Naive thymus-derived CD4-positive, alpha-beta T cell (primary cell): ENCODE measurements at regions of chr4 and their contacts with region 1.

Region 1: DNA sequence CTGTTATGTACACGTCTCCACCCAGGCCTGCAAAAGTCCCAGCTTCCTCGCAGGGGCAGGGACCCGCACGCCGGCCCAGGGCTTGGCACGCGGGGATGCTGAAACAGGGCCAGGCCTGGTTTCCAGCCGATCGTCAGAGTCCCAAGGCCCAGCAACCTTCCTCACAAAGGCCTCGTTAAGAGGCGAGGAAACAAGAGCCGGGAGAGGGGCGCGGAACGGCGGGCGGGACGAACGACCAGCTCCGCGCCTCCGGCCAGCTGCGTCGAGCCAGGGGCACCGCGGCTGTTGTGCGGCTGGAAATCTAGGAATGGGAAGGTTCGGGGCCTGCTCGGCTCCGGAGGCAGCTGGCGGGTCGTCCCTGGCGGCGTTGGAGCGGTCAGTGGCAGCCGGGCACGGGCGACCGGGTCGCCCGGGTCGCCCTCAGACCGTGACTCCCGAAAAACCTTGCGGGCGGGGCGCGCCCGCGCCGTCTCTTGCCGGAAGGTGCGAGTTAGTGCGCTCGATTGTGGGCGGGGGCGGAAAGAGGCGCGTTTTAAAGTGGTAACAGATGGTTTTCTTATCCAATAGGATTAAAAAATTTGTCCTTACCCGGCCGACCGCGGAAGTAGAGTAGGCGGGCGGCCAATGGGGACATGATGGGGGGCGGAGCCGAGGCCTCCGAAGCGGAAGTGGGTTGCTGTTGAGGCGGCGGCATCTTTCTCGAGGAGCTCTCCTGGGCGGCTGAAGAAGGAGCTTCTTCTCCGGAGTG is at the start of gene RNF4:
- DNase-seq: peak; percentile 77 to 97 (median 96)
- ATAC-seq: peak; percentile 93
- H3K4me3 ChIP-seq: peak within 1 kb of the TSS; percentile 70
- H3K4me3 Mint-ChIP-seq: peak within 1 kb of the TSS; percentile 90 to 98 (median 95)
- H3K27ac ChIP-seq: peak within 1 kb of the TSS; percentile 94
- H3K27ac Mint-ChIP-seq: peak within 1 kb of the TSS; percentile 95 to 98 (median 98)
- H3K4me1 ChIP-seq: peaks cover 31 to 37% of the 10 kb centered on the region in 2 donors
- H3K4me1 Mint-ChIP-seq: peaks cover 40 to 66% (median 53%) of the 10 kb centered on the region in 7 donors
- H3K27me3 ChIP-seq: no peaks in the 10 kb centered on the region
- H3K27me3 Mint-ChIP-seq: peaks cover 0 to 6% (median 0%) of the 10 kb centered on the region in 5 donors
- total RNA-seq, gene RNF4: 80.7 to 101 (median 91.8) TPM

Region 2: DNA sequence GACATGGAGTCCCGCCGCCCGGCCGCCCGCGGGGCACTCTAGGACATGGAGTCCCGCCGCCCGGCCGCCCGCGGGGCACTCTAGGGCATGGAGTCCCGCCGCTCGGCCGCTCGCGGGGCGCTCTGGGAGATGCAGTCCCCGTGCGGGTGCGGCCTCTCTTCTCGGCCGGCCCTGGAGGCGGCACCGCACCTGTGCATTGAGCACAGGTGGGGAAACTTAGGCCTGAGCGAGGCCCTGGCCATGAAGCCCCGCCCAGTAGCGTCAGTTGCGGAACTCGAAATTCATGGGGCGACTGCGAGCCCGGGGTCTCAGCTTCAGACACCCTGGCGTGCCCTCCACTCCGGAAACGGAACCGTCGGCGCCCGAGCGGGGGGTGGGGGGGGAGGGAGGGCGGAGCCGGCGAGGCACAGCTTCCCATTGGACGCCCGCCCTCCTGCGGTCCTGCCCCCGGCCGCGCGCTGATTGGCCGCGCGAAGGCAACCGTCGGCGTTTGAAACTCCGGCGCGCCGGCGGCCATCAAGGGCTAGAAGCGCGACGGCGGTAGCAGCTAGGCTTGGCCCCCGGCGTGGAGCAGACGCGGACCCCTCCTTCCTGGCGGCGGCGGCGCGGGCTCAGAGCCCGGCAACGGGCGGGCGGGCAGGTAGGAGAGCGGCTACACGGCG is 747.5 kb before region 1 on chr4 and contains the starts of genes TACC3 and TMEM129:
- CTCF ChIA-PET with region 1: no interaction called
- POLR2A ChIA-PET with region 1: no interaction called
- intact Hi-C with region 1: loop called in 1 of 2 experiments (anchors 2 kb)
- DNase-seq: peak; percentile 79 to 97 (median 95)
- ATAC-seq: peak; percentile 92
- H3K4me3 ChIP-seq: peak within 1 kb of the TSS; percentile 70
- H3K4me3 Mint-ChIP-seq: peak within 1 kb of the TSS; percentile 79 to 97 (median 93)
- H3K27ac ChIP-seq: peak within 1 kb of the TSS; percentile 88
- H3K27ac Mint-ChIP-seq: peak within 1 kb of the TSS; percentile 98 to 100 (median 99)
- H3K4me1 ChIP-seq: peaks cover 45 to 52% of the 10 kb centered on the region in 2 donors
- H3K4me1 Mint-ChIP-seq: peaks cover 25 to 56% (median 52%) of the 10 kb centered on the region in 7 donors
- H3K27me3 ChIP-seq: no peaks in the 10 kb centered on the region
- H3K27me3 Mint-ChIP-seq: no peaks in the 10 kb centered on the region
- total RNA-seq, gene TACC3: 100 to 165 (median 162) TPM
- total RNA-seq, gene TMEM129: 20.0 to 41.1 (median 26.7) TPM

Region 3: GRCh38 chr4:1870578-1871443 is 597.8 kb before region 1 on chr4 and contains the start of gene NSD2:
- CTCF ChIA-PET with region 1: no interaction called
- POLR2A ChIA-PET with region 1: no interaction called
- intact Hi-C with region 1: loop called in 1 of 2 experiments (anchors 2 kb)
- DNase-seq: peak; percentile 79 to 95 (median 86)
- ATAC-seq: peak; percentile 86
- H3K4me3 ChIP-seq: peak within 1 kb of the TSS; percentile 86
- H3K4me3 Mint-ChIP-seq: peak within 1 kb of the TSS; percentile 84 to 98 (median 89)
- H3K27ac ChIP-seq: peak within 1 kb of the TSS; percentile 99
- H3K27ac Mint-ChIP-seq: peak within 1 kb of the TSS; percentile 91 to 96 (median 95)
- H3K4me1 ChIP-seq: peaks cover 15 to 20% of the 10 kb centered on the region in 2 donors
- H3K4me1 Mint-ChIP-seq: peaks cover 12 to 37% (median 34%) of the 10 kb centered on the region in 7 donors
- H3K27me3 ChIP-seq: no peaks in the 10 kb centered on the region
- H3K27me3 Mint-ChIP-seq: peaks cover 0 to 4% (median 0%) of the 10 kb centered on the region in 5 donors
- total RNA-seq, gene NSD2: 35.4 to 207 (median 38.5) TPM

Region 4: GRCh38 chr4:2262143-2262943 is 206.3 kb before region 1 on chr4:
- CTCF ChIA-PET with region 1: no interaction called
- POLR2A ChIA-PET with region 1: interaction called, 13 read pairs
- intact Hi-C with region 1: loop called (anchors 1 kb)
- DNase-seq: peak; percentile 95 to 99 (median 98)
- ATAC-seq: peak; percentile 93
- H3K4me3 ChIP-seq: peak overlapping the region; percentile 69
- H3K4me3 Mint-ChIP-seq: peak overlapping the region; percentile 61 to 85 (median 76)
- H3K27ac ChIP-seq: peak overlapping the region; percentile 95
- H3K27ac Mint-ChIP-seq: peak overlapping the region; percentile 61 to 87 (median 83)
- H3K4me1 ChIP-seq: peaks cover 8 to 23% of the 10 kb centered on the region in 2 donors
- H3K4me1 Mint-ChIP-seq: peaks cover 0 to 11% (median 0%) of the 10 kb centered on the region in 7 donors
- H3K27me3 ChIP-seq: no peaks in the 10 kb centered on the region
- H3K27me3 Mint-ChIP-seq: no peaks in the 10 kb centered on the region

Region 5: GRCh38 chr4:2412885-2413716 is 55.5 kb before region 1 on chr4:
- CTCF ChIA-PET with region 1: no interaction called
- POLR2A ChIA-PET with region 1: interaction called, 6 read pairs
- intact Hi-C with region 1: loop called (anchors 1 kb)
- DNase-seq: peak; percentile 60 to 89 (median 85)
- ATAC-seq: peak; percentile 84
- H3K4me3 ChIP-seq: peak overlapping the region; percentile 29
- H3K4me3 Mint-ChIP-seq: peak overlapping the region; percentile 74 to 99 (median 84)
- H3K27ac ChIP-seq: peak overlapping the region; percentile 71
- H3K27ac Mint-ChIP-seq: peak overlapping the region; percentile 90 to 100 (median 96)
- H3K4me1 ChIP-seq: peaks cover 41 to 48% of the 10 kb centered on the region in 2 donors
- H3K4me1 Mint-ChIP-seq: peaks cover 35 to 75% (median 67%) of the 10 kb centered on the region in 7 donors
- H3K27me3 ChIP-seq: no peaks in the 10 kb centered on the region
- H3K27me3 Mint-ChIP-seq: peaks cover 0 to 25% (median 0%) of the 10 kb centered on the region in 5 donors

Region 6: GRCh38 chr4:2500547-2500946 is 31.9 kb after region 1 on chr4:
- CTCF ChIA-PET with region 1: no interaction called
- POLR2A ChIA-PET with region 1: interaction called, 3 read pairs
- intact Hi-C with region 1: loop called in 1 of 2 experiments (anchors 5 kb)
- DNase-seq: no peak
- ATAC-seq: no peak
- H3K4me3 ChIP-seq: no peak overlapping the region
- H3K4me3 Mint-ChIP-seq: no peak overlapping the region
- H3K27ac ChIP-seq: no peak overlapping the region
- H3K27ac Mint-ChIP-seq: no peak overlapping the region
- H3K4me1 ChIP-seq: no peaks in the 10 kb centered on the region
- H3K4me1 Mint-ChIP-seq: peaks cover 4 to 13% (median 5%) of the 10 kb centered on the region in 7 donors
- H3K27me3 ChIP-seq: no peaks in the 10 kb centered on the region
- H3K27me3 Mint-ChIP-seq: no peaks in the 10 kb centered on the region